Posterior cingulate gyrus (tissue), 11 donors: ENCODE measurements at regions of chr5 and their contacts with region 1.

Region 1: GRCh38 chr5:148740966-148741742 is 85.3 kb upstream of the ADRB2 start:
- DNase-seq: no peak

Region 2: DNA sequence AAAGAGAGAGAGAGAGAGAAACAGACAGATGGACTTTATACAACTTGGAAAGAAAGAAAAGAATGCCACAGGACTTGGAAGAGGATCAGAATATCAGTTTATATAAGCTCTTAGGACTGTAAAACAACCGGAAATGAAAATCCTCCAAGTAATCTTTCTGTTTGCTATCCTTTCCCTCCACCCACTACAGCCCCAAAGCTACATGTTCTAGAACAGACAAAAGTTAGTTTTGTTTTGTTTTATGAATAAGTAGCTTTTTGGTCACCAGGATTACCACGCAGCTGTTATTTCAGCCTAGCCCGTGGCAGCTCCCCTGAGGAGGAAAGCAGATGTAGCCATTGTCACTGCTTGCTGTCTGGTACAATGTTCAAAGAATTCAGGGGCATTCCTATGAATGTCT is 255.1 kb after region 1 on chr5:
- intact Hi-C with region 1: loop called (anchors 2 kb)
- DNase-seq: no peak